Breast epithelium (tissue), 4 donors: ENCODE measurements at regions of chr3 and their contacts with region 1.

Region 1: GRCh38 chr3:189027626-189028155 is 144.1 kb upstream of the TPRG1 start:
- DNase-seq: no peak
- H3K4me3 ChIP-seq: no peak overlapping the region
- H3K27ac ChIP-seq: no peak overlapping the region
- H3K4me1 ChIP-seq: no peaks in the 10 kb centered on the region
- H3K27me3 ChIP-seq: no peaks in the 10 kb centered on the region
- CTCF ChIP-seq: no peak
- POLR2A ChIP-seq: no peak

Region 2: DNA sequence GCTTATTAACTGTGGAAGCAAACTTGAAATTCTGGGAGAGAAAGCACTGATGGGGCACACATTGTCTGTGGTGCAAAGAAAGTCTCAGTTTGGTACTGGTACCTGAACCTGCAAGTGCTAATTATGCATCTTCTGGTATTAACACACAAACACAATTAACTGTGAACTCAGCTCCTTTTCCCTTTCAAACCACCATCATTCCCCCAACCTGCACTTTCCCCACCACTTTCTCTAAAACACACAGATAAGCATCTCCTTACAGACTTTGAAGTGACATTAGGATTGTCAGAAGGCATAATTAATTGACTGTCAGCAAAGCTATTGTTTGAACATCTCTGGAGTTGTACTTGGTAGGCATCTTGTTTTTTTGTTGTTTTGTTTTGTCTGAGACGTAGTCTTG is 308.1 kb before region 1 on chr3:
- intact Hi-C with region 1: loop called (anchors 5 kb)
- DNase-seq: no peak
- H3K4me3 ChIP-seq: no peak overlapping the region
- H3K27ac ChIP-seq: no peak overlapping the region
- H3K4me1 ChIP-seq: no peaks in the 10 kb centered on the region
- H3K27me3 ChIP-seq: no peaks in the 10 kb centered on the region
- CTCF ChIP-seq: no peak
- POLR2A ChIP-seq: no peak

Region 3: GRCh38 chr3:189058071-189058470 is 30.4 kb after region 1 on chr3:
- intact Hi-C with region 1: loop called (anchors 2 kb)
- DNase-seq: no peak
- H3K4me3 ChIP-seq: no peak overlapping the region
- H3K27ac ChIP-seq: no peak overlapping the region
- H3K4me1 ChIP-seq: no peaks in the 10 kb centered on the region
- H3K27me3 ChIP-seq: no peaks in the 10 kb centered on the region
- CTCF ChIP-seq: no peak
- POLR2A ChIP-seq: no peak